ENCODE measurements at regions of chr12 and their contacts with region 1.

Region 1: DNA sequence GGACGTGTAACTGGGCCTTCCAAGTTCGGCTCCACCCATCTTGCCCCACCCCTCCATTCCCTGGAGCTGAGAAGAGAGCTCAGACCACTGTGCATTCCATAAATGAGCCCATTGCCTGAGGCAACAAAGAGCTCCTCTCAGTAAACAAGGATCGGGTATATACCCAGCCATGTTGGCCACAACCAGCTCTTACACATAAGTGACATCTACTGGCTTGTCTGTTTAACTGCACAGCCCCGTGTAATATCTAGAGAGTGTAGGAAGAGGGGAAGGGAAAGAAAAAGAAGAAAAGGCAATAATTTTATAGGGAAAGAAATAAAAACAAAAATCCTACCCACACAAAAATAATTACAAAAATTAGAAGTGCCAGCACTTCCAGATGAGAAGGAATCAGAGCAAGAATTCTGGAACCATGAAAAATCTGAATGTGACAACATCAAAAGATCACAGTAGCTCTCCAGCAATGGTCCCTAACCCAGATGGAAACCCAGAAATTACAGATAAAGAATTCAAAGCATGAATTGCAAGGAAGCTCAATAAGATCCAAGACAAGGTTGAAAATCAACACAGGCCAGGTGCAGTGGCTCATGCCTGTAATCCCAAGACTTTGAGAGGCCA is 308.1 kb downstream of the RPAP3 start:
- DNase-seq: peak; percentile 77
- H3K4me3 Mint-ChIP-seq: no peak overlapping the region
- H3K27ac Mint-ChIP-seq: no peak overlapping the region
- H3K4me1 Mint-ChIP-seq: no peaks in the 10 kb centered on the region
- H3K27me3 Mint-ChIP-seq: no peaks in the 10 kb centered on the region
- CTCF ChIP-seq: peak; percentile 66

Region 2: DNA sequence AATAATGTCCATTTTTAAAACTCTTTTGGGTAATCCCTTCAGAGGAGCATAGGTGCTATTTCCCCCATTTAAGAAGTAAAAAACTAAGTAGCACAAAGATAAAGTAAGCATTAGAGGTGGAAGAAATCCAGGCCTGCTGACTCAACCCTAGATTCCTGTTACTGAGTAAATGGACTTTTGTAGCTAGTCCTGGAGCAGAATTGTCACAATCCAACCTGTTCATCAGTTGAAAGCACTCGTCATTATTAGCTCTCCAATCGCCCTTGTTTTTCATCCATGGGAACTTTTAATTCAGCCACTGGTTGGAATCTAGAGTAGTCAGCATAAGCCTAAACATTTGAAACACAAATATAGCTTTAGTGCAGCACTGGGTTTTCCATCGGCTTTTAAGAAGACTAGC is 178.5 kb before region 1 on chr12:
- CTCF ChIA-PET with region 1: interaction called, 10 read pairs
- POLR2A ChIA-PET with region 1: no interaction called
- intact Hi-C with region 1: no loop called
- DNase-seq: peak; percentile 33
- H3K4me3 Mint-ChIP-seq: no peak overlapping the region
- H3K27ac Mint-ChIP-seq: no peak overlapping the region
- H3K4me1 Mint-ChIP-seq: peaks cover 41% of the 10 kb centered on the region
- H3K27me3 Mint-ChIP-seq: no peaks in the 10 kb centered on the region
- CTCF ChIP-seq: no peak

Region 3: GRCh38 chr12:47307680-47308399 is 89.9 kb before region 1 on chr12:
- CTCF ChIA-PET with region 1: interaction called, 8 read pairs
- POLR2A ChIA-PET with region 1: interaction called, 4 read pairs
- intact Hi-C with region 1: loop called (anchors 1 kb)
- DNase-seq: peak; percentile 75
- H3K4me3 Mint-ChIP-seq: no peak overlapping the region
- H3K27ac Mint-ChIP-seq: no peak overlapping the region
- H3K4me1 Mint-ChIP-seq: peaks cover 11% of the 10 kb centered on the region
- H3K27me3 Mint-ChIP-seq: no peaks in the 10 kb centered on the region
- CTCF ChIP-seq: peak; percentile 73

Region 4: DNA sequence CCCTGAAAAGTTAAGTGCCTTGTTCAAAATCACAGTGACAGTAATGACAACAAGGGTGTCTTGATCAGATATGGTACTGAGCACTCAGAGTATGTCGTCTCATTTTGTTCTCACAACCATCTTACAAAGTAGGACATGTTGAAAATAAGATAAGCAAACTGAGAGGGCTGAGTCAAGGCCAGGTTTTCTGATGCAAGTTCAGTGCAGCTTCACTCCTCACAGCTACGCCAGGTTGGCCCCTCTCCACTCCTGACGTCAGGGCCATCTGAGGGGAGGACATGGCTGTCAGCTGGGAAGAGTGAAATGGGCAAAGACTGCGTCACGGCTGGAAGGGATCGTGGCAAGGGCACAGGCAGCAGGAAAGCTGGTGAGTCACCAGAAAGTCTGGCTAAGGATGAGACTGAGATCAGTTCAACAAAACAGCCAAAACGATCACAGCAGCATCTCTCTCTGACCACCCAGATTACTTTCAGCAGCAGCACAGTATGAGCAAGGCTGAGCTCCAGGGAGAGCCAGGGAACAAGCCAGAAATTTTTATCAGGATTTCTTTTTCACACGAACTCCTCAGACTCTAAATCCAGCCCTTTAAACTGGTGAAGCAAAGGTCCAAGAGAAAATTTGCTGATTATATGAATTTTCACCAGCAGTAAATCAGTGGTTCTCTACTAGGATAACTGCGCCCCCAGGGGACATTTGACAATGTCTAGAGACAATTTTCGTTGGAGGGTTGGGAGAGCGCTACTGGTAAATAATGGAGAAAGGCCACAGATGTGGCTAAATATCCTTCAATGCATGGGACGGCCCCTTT is 20.2 kb before region 1 on chr12:
- CTCF ChIA-PET with region 1: interaction called, 13 read pairs
- POLR2A ChIA-PET with region 1: no interaction called
- intact Hi-C with region 1: no loop called
- DNase-seq: peak; percentile 91
- H3K4me3 Mint-ChIP-seq: peak overlapping the region; percentile 12
- H3K27ac Mint-ChIP-seq: peak overlapping the region; percentile 25
- H3K4me1 Mint-ChIP-seq: peaks cover 10% of the 10 kb centered on the region
- H3K27me3 Mint-ChIP-seq: no peaks in the 10 kb centered on the region
- CTCF ChIP-seq: no peak

Region 5: GRCh38 chr12:47591361-47591791 is 193.6 kb after region 1 on chr12:
- CTCF ChIA-PET with region 1: no interaction called
- POLR2A ChIA-PET with region 1: no interaction called
- intact Hi-C with region 1: no loop called
- DNase-seq: no peak
- H3K4me3 Mint-ChIP-seq: no peak overlapping the region
- H3K27ac Mint-ChIP-seq: no peak overlapping the region
- H3K4me1 Mint-ChIP-seq: no peaks in the 10 kb centered on the region
- H3K27me3 Mint-ChIP-seq: no peaks in the 10 kb centered on the region
- CTCF ChIP-seq: no peak

Region 6: GRCh38 chr12:47686645-47687240 is 289.0 kb after region 1 on chr12:
- CTCF ChIA-PET with region 1: interaction called, 8 read pairs
- POLR2A ChIA-PET with region 1: no interaction called
- intact Hi-C with region 1: loop called (anchors 1 kb)
- DNase-seq: peak; percentile 44
- H3K4me3 Mint-ChIP-seq: no peak overlapping the region
- H3K27ac Mint-ChIP-seq: no peak overlapping the region
- H3K4me1 Mint-ChIP-seq: no peaks in the 10 kb centered on the region
- H3K27me3 Mint-ChIP-seq: no peaks in the 10 kb centered on the region
- CTCF ChIP-seq: peak; percentile 52

Measured in MCF 10A (cell line).